MCF 10A (cell line): ENCODE measurements at regions of chr12 and their contacts with region 1.

Region 1: DNA sequence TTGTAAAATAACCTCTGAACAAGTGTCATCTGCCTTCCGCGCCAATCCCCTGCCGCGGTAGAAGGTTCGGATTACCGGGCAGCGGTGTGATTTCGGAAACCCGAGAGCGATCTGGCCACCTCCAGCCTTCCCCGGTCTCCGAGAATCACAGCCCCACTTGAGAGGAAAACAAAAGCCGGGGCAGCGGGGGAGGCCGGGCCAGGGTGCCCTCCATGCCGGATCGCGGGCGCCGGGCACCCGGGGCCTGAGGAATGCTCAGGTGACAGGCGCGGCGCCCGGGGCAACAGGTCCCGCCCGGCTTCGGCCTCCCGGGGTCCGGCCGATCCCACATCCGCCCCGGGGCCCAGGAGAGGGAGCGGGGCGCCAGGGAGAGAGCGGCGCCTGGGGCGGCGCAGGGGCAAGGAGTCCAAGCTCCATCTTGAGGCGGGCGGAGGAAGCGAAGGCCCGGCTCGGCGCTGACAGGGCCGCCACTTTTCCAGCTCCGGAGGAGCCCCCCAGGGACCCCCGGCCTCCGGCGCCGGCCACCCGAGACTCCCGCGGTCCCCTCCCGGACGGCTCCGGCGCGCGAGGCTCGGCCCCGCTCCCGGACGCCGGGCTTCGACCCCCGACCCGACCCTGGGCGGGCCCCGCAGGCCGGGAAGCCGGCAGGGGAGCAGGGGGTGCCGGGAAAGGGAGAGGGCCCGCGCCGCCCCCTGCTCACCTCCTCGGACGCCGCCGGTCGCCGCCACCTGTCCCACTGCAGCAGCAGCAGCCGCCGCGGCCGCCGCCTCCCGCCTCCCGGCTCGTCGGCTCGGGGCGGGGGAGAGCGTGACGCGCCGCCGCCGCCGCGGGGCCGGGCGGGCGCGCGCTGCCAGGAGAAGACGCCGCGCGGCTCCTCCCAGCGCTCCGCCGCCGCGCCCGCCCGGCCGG is at the start of gene CLIP1:
- DNase-seq: peak; percentile 68
- H3K4me3 Mint-ChIP-seq: peak within 1 kb of the TSS; percentile 87
- H3K27ac Mint-ChIP-seq: peak within 1 kb of the TSS; percentile 95
- H3K4me1 Mint-ChIP-seq: peaks cover 4% of the 10 kb centered on the region
- H3K27me3 Mint-ChIP-seq: no peaks in the 10 kb centered on the region
- CTCF ChIP-seq: peak; percentile 66
- total RNA-seq, gene CLIP1: 92.6 and 115 TPM in 2 replicates

Region 2: DNA sequence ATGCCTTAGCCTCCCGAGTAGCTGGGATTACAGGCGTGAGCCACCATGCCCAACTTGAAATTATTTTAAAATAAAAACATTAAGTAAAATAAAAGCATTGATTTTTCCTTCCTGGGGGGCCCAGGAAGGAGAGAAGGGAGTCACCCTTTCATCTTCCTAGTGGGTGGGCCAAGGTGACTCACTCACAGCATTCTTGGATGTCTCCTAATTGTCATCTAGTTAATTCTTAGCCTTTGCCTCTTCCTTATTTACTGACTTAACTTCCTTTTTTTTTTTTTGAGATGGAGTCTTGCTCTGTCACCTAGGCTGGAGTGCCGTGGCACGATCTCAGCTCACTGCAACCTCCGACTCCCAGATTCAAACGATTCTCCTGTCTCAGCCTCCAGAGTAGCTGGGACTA is 680.3 kb before region 1 on chr12:
- CTCF ChIA-PET with region 1: no interaction called
- POLR2A ChIA-PET with region 1: no interaction called
- intact Hi-C with region 1: no loop called
- DNase-seq: no peak
- H3K4me3 Mint-ChIP-seq: no peak overlapping the region
- H3K27ac Mint-ChIP-seq: no peak overlapping the region
- H3K4me1 Mint-ChIP-seq: no peaks in the 10 kb centered on the region
- H3K27me3 Mint-ChIP-seq: no peaks in the 10 kb centered on the region
- CTCF ChIP-seq: no peak

Region 3: DNA sequence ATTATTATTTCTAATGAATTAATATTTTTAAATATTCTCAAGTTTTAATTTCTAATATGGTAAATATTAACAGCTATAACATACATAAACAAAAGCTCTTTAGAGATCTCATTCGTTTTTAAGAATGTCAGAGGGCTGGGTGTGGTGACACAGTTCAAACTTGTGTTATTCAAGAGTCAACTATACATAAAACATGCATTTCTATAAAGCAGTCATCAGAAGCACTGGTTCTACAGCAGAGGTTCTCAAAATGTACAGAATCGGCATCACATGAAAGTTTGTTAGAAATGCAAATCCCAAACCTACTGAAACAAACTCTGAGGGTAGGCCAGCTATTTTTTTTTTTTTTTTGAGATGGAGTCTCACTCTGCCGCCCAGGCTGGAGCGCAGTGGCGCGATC is 34.2 kb before region 1 on chr12:
- CTCF ChIA-PET with region 1: no interaction called
- POLR2A ChIA-PET with region 1: no interaction called
- intact Hi-C with region 1: no loop called
- DNase-seq: no peak
- H3K4me3 Mint-ChIP-seq: no peak overlapping the region
- H3K27ac Mint-ChIP-seq: no peak overlapping the region
- H3K4me1 Mint-ChIP-seq: no peaks in the 10 kb centered on the region
- H3K27me3 Mint-ChIP-seq: no peaks in the 10 kb centered on the region
- CTCF ChIP-seq: no peak

Region 4: DNA sequence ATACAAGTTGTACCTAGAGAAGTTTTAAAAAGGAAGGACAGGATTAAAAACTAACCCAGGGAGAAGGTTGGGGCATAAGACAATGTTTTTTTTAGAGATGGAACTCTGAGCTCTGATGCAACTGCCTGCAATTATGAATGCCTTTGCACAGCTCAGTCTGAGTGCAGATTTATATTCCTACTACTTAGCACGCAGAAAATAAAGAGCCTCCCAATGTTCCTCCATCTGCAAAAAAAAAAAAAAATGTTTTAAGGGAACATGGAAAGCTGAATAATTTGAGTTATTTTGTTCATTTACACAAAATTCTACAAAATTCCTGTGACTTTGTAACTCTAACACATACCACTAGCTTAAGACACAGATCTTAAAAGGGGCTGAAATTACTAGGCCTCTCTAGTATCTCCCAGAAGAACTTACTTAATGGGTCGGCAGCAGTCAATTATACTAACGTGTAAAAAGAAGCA is 15.3 kb before region 1 on chr12:
- CTCF ChIA-PET with region 1: interaction called, 14 read pairs
- POLR2A ChIA-PET with region 1: interaction called, 145 read pairs
- intact Hi-C with region 1: no loop called
- DNase-seq: no peak
- H3K4me3 Mint-ChIP-seq: no peak overlapping the region
- H3K27ac Mint-ChIP-seq: peak overlapping the region; percentile 83
- H3K4me1 Mint-ChIP-seq: peaks cover 19% of the 10 kb centered on the region
- H3K27me3 Mint-ChIP-seq: no peaks in the 10 kb centered on the region
- CTCF ChIP-seq: no peak

Region 5: GRCh38 chr12:122437656-122438121 is 15.6 kb after region 1 on chr12:
- CTCF ChIA-PET with region 1: interaction called, 3 read pairs
- POLR2A ChIA-PET with region 1: interaction called, 6 read pairs
- intact Hi-C with region 1: loop called (anchors 1 kb)
- DNase-seq: peak; percentile 88
- H3K4me3 Mint-ChIP-seq: peak overlapping the region; percentile 13
- H3K27ac Mint-ChIP-seq: no peak overlapping the region
- H3K4me1 Mint-ChIP-seq: peaks cover 22% of the 10 kb centered on the region
- H3K27me3 Mint-ChIP-seq: no peaks in the 10 kb centered on the region
- CTCF ChIP-seq: no peak

Region 6: GRCh38 chr12:122463806-122464205 is 41.7 kb after region 1 on chr12:
- CTCF ChIA-PET with region 1: no interaction called
- POLR2A ChIA-PET with region 1: interaction called, 12 read pairs
- intact Hi-C with region 1: loop called (anchors 1 kb)
- DNase-seq: no peak
- H3K4me3 Mint-ChIP-seq: no peak overlapping the region
- H3K27ac Mint-ChIP-seq: peak overlapping the region; percentile 91
- H3K4me1 Mint-ChIP-seq: no peaks in the 10 kb centered on the region
- H3K27me3 Mint-ChIP-seq: no peaks in the 10 kb centered on the region
- CTCF ChIP-seq: no peak